Activated CD8-positive, alpha-beta T cell treated with anti-CD3 and anti-CD28 coated beads for 36 hours (primary cell): ENCODE measurements at regions of chr15 and their contacts with region 1.

Region 1: DNA sequence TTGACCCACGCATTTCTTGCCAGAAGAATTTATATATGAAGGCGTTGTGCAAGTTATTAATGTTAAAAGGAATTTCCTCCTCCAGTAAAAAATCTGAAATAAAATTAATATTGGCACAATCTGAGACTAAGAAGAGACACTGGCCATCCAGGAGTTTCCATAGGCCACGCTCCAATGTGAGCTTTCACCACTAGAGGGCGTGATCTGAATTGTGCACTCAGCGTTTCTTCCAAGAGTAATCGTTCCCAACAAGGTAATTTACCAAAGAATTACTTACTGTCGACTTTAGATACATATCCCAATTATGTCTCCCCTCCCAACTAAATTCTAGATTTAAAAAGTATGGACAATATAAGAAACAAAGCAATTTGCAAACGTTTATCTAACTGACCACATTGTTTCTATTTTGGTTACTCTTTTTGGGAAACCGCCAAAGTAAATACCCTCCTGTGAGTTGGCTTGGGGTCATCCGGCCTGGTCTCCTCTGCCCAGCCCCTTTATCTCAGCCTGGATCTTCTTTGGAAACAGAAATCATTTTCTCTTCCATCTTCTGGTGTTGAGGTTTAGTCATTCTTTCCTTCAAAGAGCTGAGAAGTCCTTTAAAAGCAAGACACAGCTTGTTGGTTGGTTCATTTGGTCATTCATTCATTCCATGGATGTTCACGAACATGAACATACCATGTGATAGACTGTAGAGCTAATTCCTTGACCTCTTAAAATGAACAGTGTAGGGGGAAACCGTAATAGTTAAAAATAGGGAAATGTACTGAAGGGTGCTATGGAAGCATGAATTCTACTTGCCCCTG is 26.2 kb downstream of the POLR2M start:
- DNase-seq: peak; percentile 69
- ATAC-seq: no peak
- H3K4me3 Mint-ChIP-seq: no peak overlapping the region
- H3K27ac Mint-ChIP-seq: no peak overlapping the region
- H3K4me1 Mint-ChIP-seq: peaks cover 3% of the 10 kb centered on the region
- H3K27me3 Mint-ChIP-seq: no peaks in the 10 kb centered on the region
- CTCF ChIP-seq: peak; percentile 97

Region 2: DNA sequence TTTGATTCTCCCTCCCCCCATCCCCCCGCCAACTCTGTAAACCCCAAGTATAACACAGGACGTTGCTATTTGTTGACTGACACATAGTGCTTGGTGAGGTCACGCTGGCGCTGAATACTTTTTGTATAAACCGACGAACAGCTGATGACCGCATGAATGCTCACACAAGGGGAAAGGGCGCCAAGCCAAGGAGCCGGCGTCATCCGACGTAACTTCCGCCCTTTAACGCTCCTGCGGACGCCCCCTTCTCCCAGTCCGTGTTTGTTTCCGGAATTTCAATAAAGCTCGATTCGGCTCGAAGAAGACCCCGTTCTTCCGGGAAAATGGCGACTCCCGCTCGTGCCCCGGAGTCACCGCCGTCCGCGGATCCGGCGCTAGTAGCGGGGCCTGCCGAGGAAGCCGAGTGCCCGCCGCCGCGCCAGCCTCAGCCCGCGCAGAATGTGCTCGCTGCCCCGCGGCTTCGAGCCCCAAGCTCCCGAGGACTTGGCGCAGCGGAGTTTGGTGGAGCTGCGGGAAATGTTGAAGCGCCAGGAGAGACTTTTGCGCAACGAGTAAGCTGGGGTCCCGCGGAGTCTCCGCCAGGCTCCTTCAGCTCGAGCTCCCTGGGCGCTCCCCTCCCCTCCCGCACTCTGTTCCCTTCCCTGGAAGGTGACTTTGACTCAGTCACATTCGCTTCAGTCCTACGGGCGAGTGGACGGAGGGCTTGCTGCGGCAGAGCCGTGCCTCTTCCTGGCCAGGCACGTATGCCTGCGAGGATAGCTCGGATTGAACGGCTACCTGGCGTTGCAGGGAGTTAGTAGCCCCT is 26.1 kb before region 1 on chr15 and contains the start of gene POLR2M:
- CTCF ChIA-PET with region 1: interaction called, 16 read pairs
- POLR2A ChIA-PET with region 1: interaction called, 3 read pairs
- intact Hi-C with region 1: no loop called
- DNase-seq: peak; percentile 97
- ATAC-seq: peak; percentile 95
- H3K4me3 Mint-ChIP-seq: peak within 1 kb of the TSS; percentile 94
- H3K27ac Mint-ChIP-seq: peak within 1 kb of the TSS; percentile 93
- H3K4me1 Mint-ChIP-seq: peaks cover 72% of the 10 kb centered on the region
- H3K27me3 Mint-ChIP-seq: peaks cover 1% of the 10 kb centered on the region
- CTCF ChIP-seq: no peak
- total RNA-seq, gene POLR2M: 72.5 to 85.0 TPM

Region 3: GRCh38 chr15:57720867-57721266 is 11.9 kb before region 1 on chr15:
- CTCF ChIA-PET with region 1: interaction called, 23 read pairs
- POLR2A ChIA-PET with region 1: no interaction called
- intact Hi-C with region 1: no loop called
- DNase-seq: no peak
- ATAC-seq: no peak
- H3K4me3 Mint-ChIP-seq: no peak overlapping the region
- H3K27ac Mint-ChIP-seq: no peak overlapping the region
- H3K4me1 Mint-ChIP-seq: peaks cover 5% of the 10 kb centered on the region
- H3K27me3 Mint-ChIP-seq: no peaks in the 10 kb centered on the region
- CTCF ChIP-seq: no peak

Region 4: GRCh38 chr15:57743424-57743823 is 10.7 kb after region 1 on chr15:
- CTCF ChIA-PET with region 1: interaction called, 70 read pairs
- POLR2A ChIA-PET with region 1: no interaction called
- intact Hi-C with region 1: no loop called
- DNase-seq: no peak
- ATAC-seq: no peak
- H3K4me3 Mint-ChIP-seq: no peak overlapping the region
- H3K27ac Mint-ChIP-seq: no peak overlapping the region
- H3K4me1 Mint-ChIP-seq: no peaks in the 10 kb centered on the region
- H3K27me3 Mint-ChIP-seq: no peaks in the 10 kb centered on the region
- CTCF ChIP-seq: no peak

Region 5: GRCh38 chr15:57751177-57751800 is 18.6 kb after region 1 on chr15:
- CTCF ChIA-PET with region 1: interaction called, 70 read pairs
- POLR2A ChIA-PET with region 1: no interaction called
- intact Hi-C with region 1: no loop called
- DNase-seq: no peak
- ATAC-seq: no peak
- H3K4me3 Mint-ChIP-seq: no peak overlapping the region
- H3K27ac Mint-ChIP-seq: no peak overlapping the region
- H3K4me1 Mint-ChIP-seq: no peaks in the 10 kb centered on the region
- H3K27me3 Mint-ChIP-seq: no peaks in the 10 kb centered on the region
- CTCF ChIP-seq: peak; percentile 17

Region 6: GRCh38 chr15:57792724-57793449 is 60.2 kb after region 1 on chr15:
- CTCF ChIA-PET with region 1: no interaction called
- POLR2A ChIA-PET with region 1: no interaction called
- intact Hi-C with region 1: no loop called
- DNase-seq: no peak
- ATAC-seq: no peak
- H3K4me3 Mint-ChIP-seq: no peak overlapping the region
- H3K27ac Mint-ChIP-seq: no peak overlapping the region
- H3K4me1 Mint-ChIP-seq: no peaks in the 10 kb centered on the region
- H3K27me3 Mint-ChIP-seq: peaks cover 1% of the 10 kb centered on the region
- CTCF ChIP-seq: no peak

Region 7: GRCh38 chr15:57969354-57969753 is 236.6 kb after region 1 on chr15:
- CTCF ChIA-PET with region 1: no interaction called
- POLR2A ChIA-PET with region 1: no interaction called
- intact Hi-C with region 1: no loop called
- DNase-seq: no peak
- ATAC-seq: no peak
- H3K4me3 Mint-ChIP-seq: no peak overlapping the region
- H3K27ac Mint-ChIP-seq: no peak overlapping the region
- H3K4me1 Mint-ChIP-seq: no peaks in the 10 kb centered on the region
- H3K27me3 Mint-ChIP-seq: peaks cover 3% of the 10 kb centered on the region
- CTCF ChIP-seq: no peak